CD4-positive, alpha-beta memory T cell (primary cell): ENCODE measurements at regions of chr16 and their contacts with region 1.

Region 1: DNA sequence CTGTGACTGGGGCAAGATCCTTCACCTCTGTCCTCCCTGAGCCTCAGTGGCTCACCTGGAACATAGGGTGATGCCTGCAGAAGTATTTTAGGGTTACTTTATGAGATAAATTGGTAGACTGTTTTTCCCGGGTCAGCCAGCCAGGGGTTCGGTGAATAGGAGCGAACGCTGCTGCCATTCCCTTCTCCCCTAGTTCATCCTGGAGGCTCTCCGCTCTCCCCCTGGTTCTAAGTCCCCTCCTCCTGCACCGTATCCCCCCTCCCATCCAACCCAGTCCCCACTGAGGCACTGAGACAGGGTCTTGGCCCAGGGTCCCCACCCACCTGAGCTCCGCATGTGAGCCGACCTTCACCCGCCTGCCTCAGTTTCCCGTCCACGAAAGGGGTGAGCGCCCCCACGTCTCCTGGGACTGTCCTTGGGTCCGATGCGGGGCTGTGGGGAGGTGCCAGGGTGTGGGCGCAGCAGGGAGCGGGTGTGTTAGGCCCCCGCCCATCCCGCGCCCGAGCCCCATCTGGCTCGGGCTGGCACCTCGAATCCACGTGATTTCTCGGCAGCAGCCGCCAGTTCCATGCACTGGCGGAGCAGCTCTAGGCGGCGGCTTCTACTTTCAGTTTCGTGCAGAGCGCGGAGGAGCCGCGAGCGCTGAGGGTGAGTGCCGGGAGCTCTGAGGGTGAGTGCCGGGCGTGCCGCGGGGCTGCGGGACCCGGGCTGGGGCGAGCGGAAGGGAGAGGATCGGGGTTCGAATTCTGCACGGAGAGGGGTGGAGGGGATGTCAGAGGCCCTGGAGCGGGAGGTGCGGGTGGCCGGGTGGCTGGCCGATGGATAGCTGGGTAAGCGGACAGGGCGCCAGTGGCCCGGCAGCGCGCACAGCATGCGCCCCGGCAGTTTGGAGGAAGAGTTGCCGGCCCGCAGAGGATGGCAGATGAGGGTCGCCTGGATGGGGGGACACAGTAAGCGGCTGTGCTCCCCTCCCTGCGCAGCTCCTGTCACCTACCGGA is at the start of gene NLRC5:
- DNase-seq: peak; percentile 85 to 94 (median 89)
- H3K4me3 ChIP-seq: peak within 1 kb of the TSS; percentile 85 to 91
- H3K4me3 Mint-ChIP-seq: peak within 1 kb of the TSS; percentile 94 to 100 (median 99)
- H3K27ac ChIP-seq: peak within 1 kb of the TSS; percentile 97
- H3K27ac Mint-ChIP-seq: peak within 1 kb of the TSS; percentile 89 to 100 (median 98)
- H3K4me1 ChIP-seq: peaks cover 72% of the 10 kb centered on the region
- H3K4me1 Mint-ChIP-seq: peaks cover 50 to 96% (median 64%) of the 10 kb centered on the region in 4 donors
- H3K27me3 ChIP-seq: no peaks in the 10 kb centered on the region
- H3K27me3 Mint-ChIP-seq: no peaks in the 10 kb centered on the region
- total RNA-seq, gene NLRC5: 416 to 457 TPM

Region 2: GRCh38 chr16:56093055-56093454 is 896.2 kb before region 1 on chr16:
- CTCF ChIA-PET with region 1: no interaction called
- POLR2A ChIA-PET with region 1: no interaction called
- intact Hi-C with region 1: no loop called
- DNase-seq: no peak
- H3K4me3 ChIP-seq: no peak overlapping the region
- H3K4me3 Mint-ChIP-seq: no peak overlapping the region
- H3K27ac ChIP-seq: no peak overlapping the region
- H3K27ac Mint-ChIP-seq: no peak overlapping the region
- H3K4me1 ChIP-seq: no peaks in the 10 kb centered on the region
- H3K4me1 Mint-ChIP-seq: peaks cover 0 to 1% (median 0%) of the 10 kb centered on the region in 4 donors
- H3K27me3 ChIP-seq: no peaks in the 10 kb centered on the region
- H3K27me3 Mint-ChIP-seq: peaks cover 0 to 3% of the 10 kb centered on the region in 2 donors

Region 3: DNA sequence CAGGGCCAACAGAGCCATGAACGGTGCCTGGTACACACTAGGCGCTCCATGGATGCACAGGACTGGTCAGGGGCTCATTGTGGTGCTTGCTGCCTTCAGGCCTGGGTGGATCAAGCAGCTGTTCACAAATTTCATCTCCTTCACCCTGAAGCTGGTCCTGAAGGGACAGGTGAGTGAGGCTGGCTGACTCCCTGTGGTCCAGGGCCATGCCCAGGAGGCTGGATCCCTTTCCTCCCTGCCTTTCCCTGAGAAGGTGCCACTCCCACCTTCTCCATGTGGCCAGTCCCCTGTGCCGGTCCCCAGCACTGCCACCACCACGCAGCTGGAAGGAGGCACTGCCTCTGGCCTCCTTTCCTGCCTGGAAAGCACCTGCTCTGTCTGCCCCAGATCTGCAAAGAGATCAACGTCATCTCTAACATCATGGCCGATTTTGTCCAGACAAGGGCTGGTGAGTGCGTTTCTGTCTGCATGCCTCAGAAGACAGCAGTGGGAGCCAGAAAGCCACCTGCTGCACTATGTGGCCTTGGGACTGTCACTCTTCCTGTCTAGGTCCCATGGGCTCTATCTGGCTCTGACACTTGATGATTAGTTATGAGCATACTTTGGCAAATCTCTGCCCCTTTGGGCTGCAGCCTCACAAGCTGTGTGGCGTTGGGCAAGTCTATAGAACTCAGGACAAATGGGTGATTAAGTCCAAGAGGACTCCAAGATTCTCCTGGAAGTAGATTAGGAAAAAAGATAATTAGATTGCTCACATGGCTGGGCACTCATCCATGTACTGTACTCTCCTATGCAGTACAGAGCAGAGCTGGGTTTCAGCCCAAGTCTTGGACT is 18.1 kb before region 1 on chr16:
- CTCF ChIA-PET with region 1: interaction called, 81 read pairs
- POLR2A ChIA-PET with region 1: interaction called, 26 read pairs
- intact Hi-C with region 1: no loop called
- DNase-seq: peak in 3 of 5 donors; percentile 28 to 67 (median 41)
- H3K4me3 ChIP-seq: no peak overlapping the region
- H3K4me3 Mint-ChIP-seq: peak overlapping the region in 2 of 8 donors; percentile 59
- H3K27ac ChIP-seq: no peak overlapping the region
- H3K27ac Mint-ChIP-seq: peak overlapping the region; percentile 18 to 89 (median 73)
- H3K4me1 ChIP-seq: peaks cover 26% of the 10 kb centered on the region
- H3K4me1 Mint-ChIP-seq: peaks cover 19 to 50% (median 30%) of the 10 kb centered on the region in 4 donors
- H3K27me3 ChIP-seq: no peaks in the 10 kb centered on the region
- H3K27me3 Mint-ChIP-seq: no peaks in the 10 kb centered on the region

Region 4: GRCh38 chr16:57000271-57001025 is 11.2 kb after region 1 on chr16:
- CTCF ChIA-PET with region 1: interaction called, 8 read pairs
- POLR2A ChIA-PET with region 1: interaction called, 210 read pairs
- intact Hi-C with region 1: loop called (anchors 1 kb)
- DNase-seq: peak in 1 of 5 donors; percentile 77
- H3K4me3 ChIP-seq: peak overlapping the region; percentile 36 to 66
- H3K4me3 Mint-ChIP-seq: peak overlapping the region; percentile 71 to 90 (median 81)
- H3K27ac ChIP-seq: peak overlapping the region; percentile 79
- H3K27ac Mint-ChIP-seq: peak overlapping the region; percentile 89 to 98 (median 97)
- H3K4me1 ChIP-seq: peaks cover 95% of the 10 kb centered on the region
- H3K4me1 Mint-ChIP-seq: peaks cover 69 to 99% (median 84%) of the 10 kb centered on the region in 4 donors
- H3K27me3 ChIP-seq: no peaks in the 10 kb centered on the region
- H3K27me3 Mint-ChIP-seq: no peaks in the 10 kb centered on the region

Region 5: DNA sequence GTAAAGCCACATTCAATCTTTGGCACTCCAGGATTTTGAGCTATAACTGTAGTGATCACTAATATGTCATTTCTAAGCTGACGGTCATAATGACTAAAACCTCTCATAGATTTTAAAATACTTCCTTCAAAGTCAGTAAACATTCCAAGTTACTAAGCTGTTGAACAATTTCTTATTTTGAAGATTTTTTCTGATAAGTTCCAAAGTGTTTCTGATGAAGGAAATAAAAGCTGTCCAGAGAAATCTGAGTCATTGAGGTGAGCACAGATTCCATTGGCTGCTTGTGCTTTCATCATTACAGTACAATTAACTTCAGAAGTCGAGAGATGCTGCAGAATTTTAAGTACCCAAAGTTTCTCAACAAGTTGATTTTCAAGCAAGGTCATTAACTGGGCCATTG is 24.0 kb after region 1 on chr16:
- CTCF ChIA-PET with region 1: interaction called, 9 read pairs
- POLR2A ChIA-PET with region 1: interaction called, 210 read pairs
- intact Hi-C with region 1: loop called (anchors 1 kb)
- DNase-seq: no peak
- H3K4me3 ChIP-seq: no peak overlapping the region
- H3K4me3 Mint-ChIP-seq: peak overlapping the region in 6 of 8 donors; percentile 63 to 89 (median 78)
- H3K27ac ChIP-seq: peak overlapping the region; percentile 79
- H3K27ac Mint-ChIP-seq: peak overlapping the region; percentile 83 to 98 (median 97)
- H3K4me1 ChIP-seq: peaks cover 98% of the 10 kb centered on the region
- H3K4me1 Mint-ChIP-seq: peaks cover 52 to 90% (median 69%) of the 10 kb centered on the region in 4 donors
- H3K27me3 ChIP-seq: no peaks in the 10 kb centered on the region
- H3K27me3 Mint-ChIP-seq: no peaks in the 10 kb centered on the region

Region 6: GRCh38 chr16:57023541-57024249 is 34.4 kb after region 1 on chr16:
- CTCF ChIA-PET with region 1: interaction called, 4 read pairs
- POLR2A ChIA-PET with region 1: interaction called, 64 read pairs
- intact Hi-C with region 1: no loop called
- DNase-seq: peak; percentile 77 to 91 (median 83)
- H3K4me3 ChIP-seq: peak overlapping the region; percentile 5 to 11
- H3K4me3 Mint-ChIP-seq: peak overlapping the region in 7 of 8 donors; percentile 54 to 84 (median 73)
- H3K27ac ChIP-seq: peak overlapping the region; percentile 58
- H3K27ac Mint-ChIP-seq: peak overlapping the region; percentile 87 to 94 (median 90)
- H3K4me1 ChIP-seq: peaks cover 92% of the 10 kb centered on the region
- H3K4me1 Mint-ChIP-seq: peaks cover 66 to 99% (median 82%) of the 10 kb centered on the region in 4 donors
- H3K27me3 ChIP-seq: no peaks in the 10 kb centered on the region
- H3K27me3 Mint-ChIP-seq: no peaks in the 10 kb centered on the region

Region 7: DNA sequence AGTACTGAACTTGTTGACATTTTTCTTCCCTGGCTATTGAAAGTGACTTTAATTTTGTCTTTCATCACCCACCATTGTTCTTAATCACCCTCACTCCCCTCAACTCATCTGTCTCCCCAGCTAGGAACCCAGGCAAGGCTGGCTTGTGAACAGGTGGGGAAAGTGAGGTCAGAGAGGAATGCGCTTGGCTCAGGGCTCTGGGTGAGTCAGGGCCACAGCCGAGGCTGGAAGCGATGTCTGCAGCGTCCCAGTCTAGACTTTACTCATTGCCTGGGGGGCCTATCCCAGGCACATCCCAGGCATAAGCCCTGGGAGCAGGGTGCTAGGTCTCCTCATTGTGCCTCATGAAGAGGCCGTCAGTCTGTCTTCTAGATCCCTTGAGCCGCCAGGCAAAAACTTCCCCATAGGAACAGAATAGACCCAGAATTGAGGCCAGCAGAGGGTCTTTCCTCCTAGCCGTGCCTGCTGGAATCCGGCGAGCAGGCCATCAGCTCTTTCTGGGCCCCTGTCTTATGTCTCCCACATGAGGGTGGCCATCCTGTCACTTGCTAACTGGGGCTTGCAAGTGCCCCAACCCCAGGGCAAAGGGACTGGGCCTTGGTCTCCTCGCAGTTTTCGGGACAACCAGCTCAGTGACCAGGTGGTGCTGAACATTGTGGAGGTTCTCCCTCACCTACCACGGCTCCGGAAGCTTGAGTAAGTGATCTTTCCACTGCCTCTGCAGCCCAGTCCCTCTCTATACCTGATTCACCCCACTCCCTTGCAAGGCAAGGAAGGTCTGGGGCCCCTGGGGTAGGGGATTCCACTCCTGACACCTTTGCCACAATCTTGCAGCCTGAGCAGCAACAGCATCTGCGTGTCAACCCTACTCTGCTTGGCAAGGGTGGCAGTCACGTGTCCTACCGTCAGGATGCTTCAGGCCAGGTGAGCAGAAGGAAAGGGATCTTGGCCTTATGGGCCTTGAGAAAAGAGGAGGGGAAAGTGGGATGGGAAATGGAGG is 40.2 kb after region 1 on chr16:
- CTCF ChIA-PET with region 1: interaction called, 4 read pairs
- POLR2A ChIA-PET with region 1: interaction called, 64 read pairs
- intact Hi-C with region 1: no loop called
- DNase-seq: no peak
- H3K4me3 ChIP-seq: no peak overlapping the region
- H3K4me3 Mint-ChIP-seq: peak overlapping the region in 1 of 8 donors; percentile 4
- H3K27ac ChIP-seq: no peak overlapping the region
- H3K27ac Mint-ChIP-seq: peak overlapping the region; percentile 29 to 87 (median 78)
- H3K4me1 ChIP-seq: peaks cover 82% of the 10 kb centered on the region
- H3K4me1 Mint-ChIP-seq: peaks cover 31 to 91% (median 63%) of the 10 kb centered on the region in 4 donors
- H3K27me3 ChIP-seq: no peaks in the 10 kb centered on the region
- H3K27me3 Mint-ChIP-seq: no peaks in the 10 kb centered on the region